Posterior vena cava (tissue), 2 donors: ENCODE measurements at regions of chr1 and their contacts with region 1.

Region 1: DNA sequence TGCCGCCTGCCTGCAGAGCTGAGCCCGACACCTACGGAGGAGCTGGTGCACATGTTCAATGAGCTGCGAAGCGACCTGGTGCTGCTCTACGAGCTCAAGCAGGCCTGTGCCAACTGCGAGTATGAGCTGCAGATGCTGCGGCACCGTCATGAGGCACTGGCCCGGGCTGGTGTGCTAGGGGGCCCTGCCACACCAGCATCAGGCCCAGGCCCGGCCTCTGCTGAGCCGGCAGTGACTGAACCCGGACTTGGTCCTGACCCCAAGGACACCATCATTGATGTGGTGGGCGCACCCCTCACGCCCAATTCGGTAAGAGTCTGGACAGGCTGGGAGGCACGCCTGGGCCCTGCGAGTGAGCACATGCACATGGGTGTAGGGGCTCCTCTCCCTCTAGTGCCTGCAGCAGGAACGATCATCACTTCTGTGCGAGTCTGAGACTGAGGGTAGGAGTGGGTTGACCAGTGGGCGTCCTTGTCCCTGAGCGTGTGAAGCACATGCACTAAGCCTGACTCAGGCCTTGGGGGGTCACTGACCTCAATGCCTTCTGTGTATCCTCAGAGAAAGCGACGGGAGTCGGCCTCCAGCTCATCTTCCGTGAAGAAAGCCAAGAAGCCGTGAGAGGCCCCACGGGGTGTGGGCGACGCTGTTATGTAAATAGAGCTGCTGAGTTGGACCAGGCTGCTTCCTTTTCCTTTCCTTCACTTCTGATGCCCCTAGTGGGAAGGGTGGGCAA is 6.9 kb downstream of the DMAP1 start:
- DNase-seq: peak; percentile 73

Region 2: GRCh38 chr1:44237721-44238457 is 17.7 kb after region 1 on chr1:
- intact Hi-C with region 1: loop called in 1 of 2 experiments (anchors 1 kb)
- DNase-seq: peak; percentile 87

Region 3: GRCh38 chr1:44283524-44284173 is 63.5 kb after region 1 on chr1:
- intact Hi-C with region 1: loop called in 1 of 2 experiments (anchors 5 kb)
- DNase-seq: no peak

Region 4: DNA sequence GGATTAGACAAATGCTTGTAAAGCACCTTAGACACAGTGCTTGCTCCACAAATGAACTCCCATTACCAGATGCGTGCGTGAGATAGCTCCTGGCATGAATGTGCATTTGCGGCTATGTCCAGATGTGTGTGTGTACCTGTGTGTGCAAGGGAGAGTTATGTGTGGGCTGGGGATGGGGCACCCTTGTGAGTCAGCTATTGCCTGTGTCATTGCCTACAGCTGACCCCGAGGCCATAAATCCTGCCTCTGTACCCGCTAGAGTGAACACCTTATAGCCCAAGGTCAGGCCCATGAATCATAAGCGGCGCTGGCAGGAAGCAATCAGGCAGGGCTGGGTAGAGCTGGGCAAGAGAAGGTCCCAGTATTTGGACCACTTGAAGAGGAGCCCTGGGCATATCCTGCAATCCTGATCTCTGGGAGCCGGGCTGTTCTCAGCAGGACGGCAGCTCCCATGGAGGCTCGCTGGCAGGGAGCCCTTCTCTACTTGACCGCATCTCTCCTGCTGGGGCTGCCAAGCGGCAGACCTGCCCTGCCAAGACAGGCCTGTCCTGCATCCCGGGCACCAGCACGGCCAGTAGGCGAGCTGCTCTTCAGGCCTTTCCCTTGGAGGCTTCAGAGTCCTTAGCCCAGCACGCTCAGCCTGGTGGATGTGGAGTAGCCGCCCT is 367.8 kb after region 1 on chr1:
- intact Hi-C with region 1: loop called (anchors 1 to 10 kb)
- DNase-seq: peak; percentile 74

Region 5: DNA sequence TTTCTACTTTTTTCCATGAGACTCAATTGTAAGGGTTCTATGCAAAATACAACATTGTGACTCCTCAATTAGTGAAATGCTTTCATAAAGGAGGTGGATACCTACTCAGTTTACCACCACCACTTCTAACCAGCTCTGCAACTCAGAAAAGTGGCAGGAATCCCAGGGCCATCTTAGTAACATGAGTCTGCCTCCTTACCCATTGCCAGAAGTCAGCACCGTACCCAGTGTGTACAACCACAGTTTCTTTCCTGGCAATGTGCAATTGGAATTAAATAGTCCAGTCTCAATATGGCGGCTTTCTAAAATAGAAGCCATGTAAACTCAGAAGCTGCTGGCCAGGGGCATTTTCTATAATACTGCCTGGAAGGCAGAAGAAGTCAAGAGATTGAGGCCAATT is 1238.7 kb after region 1 on chr1:
- intact Hi-C with region 1: no loop called
- DNase-seq: no peak